RWPE1 (cell line): ENCODE measurements at regions of chr11 and their contacts with region 1.

Region 1: GRCh38 chr11:73404048-73404447 is 27.8 kb downstream of the RELT start:
- DNase-seq: peak; percentile 45
- H3K27ac ChIP-seq: no peak overlapping the region
- CTCF ChIP-seq: peak; percentile 23

Region 2: GRCh38 chr11:73597956-73598718 is 194.1 kb after region 1 on chr11 and contains the start of gene FAM168A:
- CTCF ChIA-PET with region 1: no interaction called
- POLR2A ChIA-PET with region 1: interaction called, 10 read pairs
- DNase-seq: peak; percentile 95
- H3K27ac ChIP-seq: peak within 1 kb of the TSS; percentile 83
- CTCF ChIP-seq: no peak

Region 3: GRCh38 chr11:73661035-73661628 is 257.1 kb after region 1 on chr11:
- CTCF ChIA-PET with region 1: interaction called, 19 read pairs
- POLR2A ChIA-PET with region 1: no interaction called
- DNase-seq: peak; percentile 95
- H3K27ac ChIP-seq: no peak overlapping the region
- CTCF ChIP-seq: peak; percentile 91

Region 4: GRCh38 chr11:73752216-73752867 is 348.3 kb after region 1 on chr11:
- CTCF ChIA-PET with region 1: no interaction called
- POLR2A ChIA-PET with region 1: no interaction called
- DNase-seq: no peak
- H3K27ac ChIP-seq: 0 out of 2 replicates have a peak overlapping the region, but pooled peaks have one; percentile 6
- CTCF ChIP-seq: no peak